CD4-positive, alpha-beta memory T cell (primary cell): ENCODE measurements at regions of chr2 and their contacts with region 1.

Region 1: GRCh38 chr2:42127425-42128424 is 41.4 kb upstream of the EML4 start:
- DNase-seq: peak; percentile 61 to 71 (median 66)
- H3K4me3 ChIP-seq: peak overlapping the region in 1 of 2 donors; percentile 41
- H3K4me3 Mint-ChIP-seq: peak overlapping the region; percentile 36 to 81 (median 74)
- H3K27ac ChIP-seq: peak overlapping the region; percentile 52
- H3K27ac Mint-ChIP-seq: peak overlapping the region; percentile 88 to 100 (median 96)
- H3K4me1 ChIP-seq: peaks cover 97% of the 10 kb centered on the region
- H3K4me1 Mint-ChIP-seq: peaks cover 71 to 99% (median 88%) of the 10 kb centered on the region in 4 donors
- H3K27me3 ChIP-seq: no peaks in the 10 kb centered on the region
- H3K27me3 Mint-ChIP-seq: no peaks in the 10 kb centered on the region

Region 2: GRCh38 chr2:42141687-42142546 is 14.2 kb after region 1 on chr2:
- CTCF ChIA-PET with region 1: interaction called, 9 read pairs
- POLR2A ChIA-PET with region 1: interaction called, 73 read pairs
- intact Hi-C with region 1: no loop called
- DNase-seq: peak in 2 of 5 donors; percentile 36 to 55
- H3K4me3 ChIP-seq: peak overlapping the region in 1 of 2 donors; percentile 1
- H3K4me3 Mint-ChIP-seq: peak overlapping the region in 7 of 8 donors; percentile 27 to 80 (median 76)
- H3K27ac ChIP-seq: peak overlapping the region; percentile 40
- H3K27ac Mint-ChIP-seq: peak overlapping the region; percentile 86 to 95 (median 93)
- H3K4me1 ChIP-seq: peaks cover 65% of the 10 kb centered on the region
- H3K4me1 Mint-ChIP-seq: peaks cover 40 to 71% (median 56%) of the 10 kb centered on the region in 4 donors
- H3K27me3 ChIP-seq: no peaks in the 10 kb centered on the region
- H3K27me3 Mint-ChIP-seq: no peaks in the 10 kb centered on the region

Region 3: DNA sequence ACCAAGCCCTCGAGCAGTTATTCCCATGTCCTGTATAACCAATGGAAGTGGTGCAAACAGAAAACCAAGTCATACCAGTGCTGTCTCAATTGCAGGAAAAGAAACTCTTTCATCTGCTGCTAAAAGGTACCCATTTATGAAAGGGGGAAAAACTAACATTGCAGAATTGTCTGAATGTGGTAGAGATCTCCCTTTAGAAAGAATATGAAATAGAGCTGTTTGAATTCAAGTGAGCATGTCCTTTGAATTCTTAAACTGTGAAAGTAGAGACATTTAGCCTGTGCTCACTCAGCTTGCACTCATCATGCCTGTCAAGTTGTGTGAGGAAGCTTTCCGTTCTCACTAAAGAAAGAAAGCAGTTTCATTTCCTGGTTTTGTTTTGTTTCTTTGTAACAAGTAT is 128.8 kb after region 1 on chr2:
- CTCF ChIA-PET with region 1: no interaction called
- POLR2A ChIA-PET with region 1: no interaction called
- intact Hi-C with region 1: no loop called
- DNase-seq: no peak
- H3K4me3 ChIP-seq: no peak overlapping the region
- H3K4me3 Mint-ChIP-seq: peak overlapping the region in 5 of 8 donors; percentile 52 to 71 (median 61)
- H3K27ac ChIP-seq: no peak overlapping the region
- H3K27ac Mint-ChIP-seq: peak overlapping the region in 6 of 7 donors; percentile 14 to 85 (median 38)
- H3K4me1 ChIP-seq: peaks cover 52% of the 10 kb centered on the region
- H3K4me1 Mint-ChIP-seq: peaks cover 35 to 64% (median 49%) of the 10 kb centered on the region in 4 donors
- H3K27me3 ChIP-seq: no peaks in the 10 kb centered on the region
- H3K27me3 Mint-ChIP-seq: no peaks in the 10 kb centered on the region